ENCODE measurements at regions of chr1 and their contacts with region 1.

Region 1: GRCh38 chr1:33295450-33296081 is 25.3 kb downstream of the A3GALT2 start:
- DNase-seq: peak; percentile 93
- H3K4me3 Mint-ChIP-seq: no peak overlapping the region
- H3K27ac Mint-ChIP-seq: no peak overlapping the region
- H3K4me1 Mint-ChIP-seq: peaks cover 13% of the 10 kb centered on the region
- H3K27me3 Mint-ChIP-seq: no peaks in the 10 kb centered on the region

Region 2: GRCh38 chr1:33306648-33307493 is 11.3 kb after region 1 on chr1:
- CTCF ChIA-PET with region 1: interaction called, 12 read pairs
- DNase-seq: no peak
- H3K4me3 Mint-ChIP-seq: no peak overlapping the region
- H3K27ac Mint-ChIP-seq: no peak overlapping the region
- H3K4me1 Mint-ChIP-seq: peaks cover 21% of the 10 kb centered on the region
- H3K27me3 Mint-ChIP-seq: peaks cover 41% of the 10 kb centered on the region

Region 3: GRCh38 chr1:33361532-33362235 is 66.1 kb after region 1 on chr1:
- CTCF ChIA-PET with region 1: interaction called, 101 read pairs
- DNase-seq: no peak
- H3K4me3 Mint-ChIP-seq: no peak overlapping the region
- H3K27ac Mint-ChIP-seq: no peak overlapping the region
- H3K4me1 Mint-ChIP-seq: peaks cover 8% of the 10 kb centered on the region
- H3K27me3 Mint-ChIP-seq: peaks cover 4% of the 10 kb centered on the region

Region 4: DNA sequence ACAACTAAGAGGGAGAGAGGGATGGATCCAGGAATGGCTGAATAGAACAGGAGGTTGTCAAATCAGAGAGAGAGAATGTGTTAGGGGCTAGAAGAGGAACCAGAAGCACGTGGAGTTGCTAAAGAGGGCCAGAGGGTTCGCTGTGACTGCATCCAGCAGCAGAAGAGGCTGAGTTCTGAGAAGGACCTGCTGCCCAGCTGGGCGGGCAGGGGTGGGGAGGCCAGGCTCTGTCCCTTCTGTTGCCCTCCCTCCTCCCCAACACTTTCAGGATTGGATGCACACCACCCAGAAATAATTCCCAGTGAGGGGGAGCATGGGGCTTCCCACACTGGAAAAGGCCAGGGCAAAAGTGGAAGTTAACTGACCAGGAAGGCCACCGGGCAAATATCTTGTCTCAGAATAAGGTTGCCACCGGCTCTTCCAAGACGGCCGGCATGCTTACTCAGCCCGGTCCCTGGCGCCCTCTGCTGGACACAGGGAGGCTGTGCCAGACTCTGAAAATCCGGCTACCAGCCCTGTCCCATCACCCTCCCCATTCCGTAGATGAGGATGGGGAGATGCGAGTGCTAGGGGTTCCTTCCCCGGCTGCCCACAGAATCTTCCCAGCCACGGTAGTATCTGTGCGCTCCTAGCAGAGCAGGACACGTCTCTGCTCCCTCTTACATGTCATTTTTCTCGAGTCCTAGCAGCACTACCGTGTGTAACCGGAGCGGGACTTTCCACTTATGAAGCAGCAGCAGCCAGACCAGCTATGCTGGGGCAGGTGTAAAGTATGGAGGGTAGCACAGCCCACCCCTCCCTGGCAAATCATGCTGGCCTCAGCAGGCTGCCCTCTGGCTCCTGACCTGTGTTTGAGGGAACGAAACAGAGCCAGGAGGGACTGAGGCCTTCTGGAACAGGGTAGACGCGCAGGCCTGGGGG is 72.2 kb after region 1 on chr1:
- CTCF ChIA-PET with region 1: interaction called, 101 read pairs
- DNase-seq: peak; percentile 90
- H3K4me3 Mint-ChIP-seq: no peak overlapping the region
- H3K27ac Mint-ChIP-seq: no peak overlapping the region
- H3K4me1 Mint-ChIP-seq: no peaks in the 10 kb centered on the region
- H3K27me3 Mint-ChIP-seq: peaks cover 34% of the 10 kb centered on the region

Region 5: DNA sequence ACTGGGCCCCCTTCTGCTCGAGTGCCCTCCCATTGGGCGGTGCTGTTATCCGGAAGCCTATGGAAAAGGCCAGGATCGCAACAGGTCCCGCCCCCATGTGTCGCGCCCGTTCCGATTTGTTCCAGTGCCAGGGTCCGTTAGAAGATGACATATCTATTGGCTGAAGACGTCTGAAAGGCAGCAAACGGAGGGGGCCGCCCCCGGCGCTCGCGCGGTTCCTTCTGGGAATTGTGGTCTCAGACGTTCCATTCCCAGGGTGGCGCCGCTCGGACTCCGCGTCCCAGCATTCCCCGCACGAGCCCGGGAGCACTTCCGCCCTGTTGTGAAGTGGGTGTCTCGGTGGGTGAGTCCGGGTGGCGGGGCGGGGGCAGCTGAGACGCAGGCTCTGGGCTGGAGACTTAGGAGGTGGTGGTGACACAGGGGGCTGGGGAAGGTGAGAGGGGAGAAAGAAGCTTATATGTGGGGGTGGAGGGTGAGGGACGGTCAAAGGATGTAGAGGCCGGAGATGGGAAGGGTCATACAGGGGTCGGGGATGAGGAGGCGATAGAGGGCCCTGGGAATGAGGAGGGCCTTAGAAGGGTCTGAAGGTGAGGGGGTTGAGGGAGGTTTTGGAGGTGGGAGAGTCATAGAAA is 176.9 kb after region 1 on chr1 and contains the start of gene ZSCAN20:
- CTCF ChIA-PET with region 1: interaction called, 108 read pairs
- DNase-seq: peak; percentile 92
- H3K4me3 Mint-ChIP-seq: peak within 1 kb of the TSS; percentile 82
- H3K27ac Mint-ChIP-seq: peak within 1 kb of the TSS; percentile 80
- H3K4me1 Mint-ChIP-seq: peaks cover 35% of the 10 kb centered on the region
- H3K27me3 Mint-ChIP-seq: peaks cover 9% of the 10 kb centered on the region

Measured in activated naive CD4-positive, alpha-beta T cell treated with anti-CD3 and anti-CD28 coated beads, Interleukin-2, amount 10 ng/mL, durations not matched to agents 7 days and 5 days (primary cell).